GM12878 (cell line): ENCODE measurements at regions of chr14 and their contacts with region 1.

Region 1: DNA sequence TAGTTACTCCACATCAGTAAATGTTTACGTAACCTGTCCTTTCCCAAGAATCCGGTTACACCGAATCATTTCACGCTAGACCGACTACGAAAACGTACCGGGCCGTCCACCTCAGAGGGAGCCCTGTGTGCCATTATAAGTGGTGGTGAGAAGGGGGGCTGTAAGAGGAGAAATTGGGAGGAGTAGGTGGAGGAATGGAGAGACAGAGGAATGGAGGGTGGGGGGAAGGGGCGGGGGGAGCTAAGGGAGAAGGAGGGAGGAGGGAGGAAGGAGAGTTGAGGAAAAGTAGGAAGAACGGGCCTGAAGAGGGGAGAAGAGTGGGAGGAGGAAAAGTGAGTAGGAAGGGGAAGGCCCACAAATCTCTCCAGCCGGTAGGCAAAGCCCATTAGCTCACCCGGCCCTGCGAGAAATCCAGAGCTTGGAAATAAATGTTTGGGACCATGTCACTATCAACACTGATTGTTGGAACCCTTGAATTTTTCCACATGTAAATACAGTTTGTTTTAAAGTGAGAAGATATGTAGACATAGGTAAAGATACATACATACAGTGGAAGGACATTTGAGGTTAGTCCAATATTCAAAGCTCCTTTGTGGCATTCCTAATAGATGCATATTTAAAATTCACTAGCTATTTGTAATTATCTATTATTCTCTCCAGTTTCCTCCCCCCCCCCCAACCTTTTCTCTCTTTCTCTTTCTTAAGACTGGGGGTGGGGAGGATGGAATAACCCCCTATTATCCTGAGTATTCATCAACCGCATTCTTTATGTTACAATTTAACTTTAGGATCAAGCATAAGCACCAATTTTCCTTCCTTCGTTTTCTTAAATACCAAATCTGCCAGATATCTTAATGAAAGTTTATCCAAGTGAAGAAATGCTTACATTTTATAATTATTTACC is 2.1 kb upstream of the FOXG1 start:
- DNase-seq: no peak
- ATAC-seq: no peak
- H3K4me3 ChIP-seq: no peak overlapping the region
- H3K27ac ChIP-seq: no peak overlapping the region
- H3K4me1 ChIP-seq: no peaks in the 10 kb centered on the region
- H3K27me3 ChIP-seq: peaks cover 0 to 6% of the 10 kb centered on the region in 2 experiments; a peak in 3 of 4 replicates
- CTCF ChIP-seq: no peak
- EP300 ChIP-seq: no peak
- POLR2A ChIP-seq: no peak
- RAD21 ChIP-seq: no peak

Region 2: DNA sequence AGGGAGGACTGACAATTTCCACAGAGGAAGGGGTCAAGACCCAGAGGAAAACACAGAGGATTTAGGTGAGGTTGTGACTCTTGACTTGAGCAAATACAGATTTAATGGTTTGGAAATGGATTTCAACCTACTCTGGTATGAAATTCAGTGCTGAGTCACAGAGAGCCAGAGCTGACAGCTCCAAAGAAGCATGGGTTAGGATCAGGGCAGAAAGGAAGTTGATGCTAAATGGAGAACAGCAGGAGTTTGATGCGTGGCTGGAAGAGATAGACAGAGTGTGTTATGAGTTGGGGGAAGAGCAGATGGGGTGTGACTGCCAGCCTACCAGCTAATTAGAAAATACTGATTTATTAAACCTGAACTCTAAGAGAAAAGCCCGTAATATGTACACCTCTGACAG is 274.7 kb after region 1 on chr14:
- CTCF ChIA-PET with region 1: no interaction called
- POLR2A ChIA-PET with region 1: no interaction called
- RAD21 ChIA-PET with region 1: no interaction called
- SMC1A ChIA-PET with region 1: no interaction called
- in situ Hi-C with region 1: no loop called
- intact Hi-C with region 1: no loop called
- DNase-seq: no peak
- ATAC-seq: no peak
- H3K4me3 ChIP-seq: no peak overlapping the region
- H3K27ac ChIP-seq: no peak overlapping the region
- H3K4me1 ChIP-seq: no peaks in the 10 kb centered on the region
- H3K27me3 ChIP-seq: no peaks in the 10 kb centered on the region
- CTCF ChIP-seq: no peak
- EP300 ChIP-seq: no peak
- POLR2A ChIP-seq: no peak
- RAD21 ChIP-seq: no peak

Region 3: GRCh38 chr14:30214461-30215090 is 1450.1 kb after region 1 on chr14:
- CTCF ChIA-PET with region 1: no interaction called
- POLR2A ChIA-PET with region 1: no interaction called
- RAD21 ChIA-PET with region 1: no interaction called
- SMC1A ChIA-PET with region 1: no interaction called
- in situ Hi-C with region 1: loop called (anchors 5 kb)
- intact Hi-C with region 1: no loop called
- DNase-seq: peak; percentile 8
- ATAC-seq: peak; percentile 63; the same call in 2 of the 3 replicates
- H3K4me3 ChIP-seq: no peak overlapping the region
- H3K27ac ChIP-seq: no peak overlapping the region
- H3K4me1 ChIP-seq: no peaks in the 10 kb centered on the region
- H3K27me3 ChIP-seq: no peaks in the 10 kb centered on the region
- CTCF ChIP-seq: peak in 2 of 3 experiments; percentile 41 to 54; a peak in 3 of 6 replicates
- EP300 ChIP-seq: no peak
- POLR2A ChIP-seq: no peak
- RAD21 ChIP-seq: peak; percentile 75